ENCODE measurements at regions of chr4 and their contacts with region 1.

Region 1: GRCh38 chr4:88378691-88379559 is at the start of gene HERC6:
- DNase-seq: peak; percentile 83
- H3K4me3 ChIP-seq: peak within 1 kb of the TSS; percentile 76 to 97 (median 80)
- H3K27ac ChIP-seq: peak within 1 kb of the TSS; percentile 89 to 96 (median 92)
- H3K4me1 ChIP-seq: peaks cover 0 to 4% (median 0%) of the 10 kb centered on the region in 4 donors
- H3K27me3 ChIP-seq: no peaks in the 10 kb centered on the region
- CTCF ChIP-seq: peak; percentile 69 to 94 (median 79)
- EP300 ChIP-seq: no peak
- POLR2A ChIP-seq: peak; percentile 21
- total RNA-seq, gene HERC6: 3.2 to 15.2 (median 5.8) TPM

Region 2: DNA sequence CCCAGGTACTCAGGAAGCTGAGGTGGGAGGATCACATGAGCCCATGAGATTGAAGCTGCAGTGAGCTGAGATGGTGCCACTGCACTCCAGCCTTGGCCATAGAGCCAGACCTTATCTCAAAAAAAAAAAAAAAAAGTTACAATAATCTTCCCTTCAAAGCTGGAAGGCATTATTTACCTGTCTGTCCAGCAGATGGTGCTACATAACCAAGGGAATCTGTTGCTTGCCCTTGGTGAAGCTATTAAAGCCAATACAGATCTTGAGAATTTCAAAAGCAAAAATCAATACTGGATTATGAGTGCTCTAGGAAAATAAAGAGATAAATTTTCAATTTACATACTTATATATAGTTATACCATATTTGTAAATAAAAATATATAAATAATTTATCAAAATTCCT is 345.6 kb before region 1 on chr4:
- in situ Hi-C with region 1: loop called in 1 of 4 experiments (anchors 25 kb)
- intact Hi-C with region 1: no loop called
- DNase-seq: peak; percentile 25
- H3K4me3 ChIP-seq: no peak overlapping the region
- H3K27ac ChIP-seq: no peak overlapping the region
- H3K4me1 ChIP-seq: peaks cover 0 to 3% (median 0%) of the 10 kb centered on the region in 4 donors
- H3K27me3 ChIP-seq: no peaks in the 10 kb centered on the region
- CTCF ChIP-seq: peak; percentile 63 to 70 (median 65)
- EP300 ChIP-seq: no peak
- POLR2A ChIP-seq: no peak

Region 3: GRCh38 chr4:88291003-88291402 is 87.9 kb before region 1 on chr4:
- in situ Hi-C with region 1: no loop called
- intact Hi-C with region 1: loop called (anchors 10 kb)
- DNase-seq: no peak
- H3K4me3 ChIP-seq: no peak overlapping the region
- H3K27ac ChIP-seq: no peak overlapping the region
- H3K4me1 ChIP-seq: no peaks in the 10 kb centered on the region
- H3K27me3 ChIP-seq: no peaks in the 10 kb centered on the region
- CTCF ChIP-seq: no peak
- EP300 ChIP-seq: no peak
- POLR2A ChIP-seq: no peak

Region 4: DNA sequence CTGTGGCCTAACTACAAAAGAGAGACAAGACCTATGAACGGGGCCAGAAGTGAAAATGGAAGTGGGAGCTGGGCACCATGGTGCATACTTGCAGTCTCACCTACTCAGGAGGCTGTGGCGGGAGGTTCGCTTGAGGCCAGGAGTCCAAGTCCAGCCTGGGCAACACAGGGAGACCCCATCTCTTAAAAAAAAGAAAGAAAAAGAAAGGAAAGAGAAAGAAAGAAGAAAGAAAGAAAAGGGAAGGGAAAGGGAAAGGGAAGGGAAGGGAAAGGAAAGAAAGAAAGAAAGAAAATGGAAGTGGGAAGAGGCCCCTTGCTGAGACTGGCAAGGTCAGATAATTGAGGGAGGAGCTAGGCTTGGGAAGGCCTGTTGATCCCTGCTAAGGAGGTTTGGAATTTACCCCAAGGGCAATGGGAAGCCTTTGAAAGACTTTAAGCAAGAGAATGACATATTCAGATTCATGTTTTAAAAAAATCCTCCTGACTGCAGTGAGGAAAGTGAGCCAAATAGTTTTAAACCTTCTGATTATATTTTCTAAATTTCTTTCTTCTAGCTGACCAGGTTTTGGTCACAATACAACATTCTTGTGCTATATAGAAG is 60.3 kb after region 1 on chr4:
- in situ Hi-C with region 1: no loop called
- intact Hi-C with region 1: no loop called
- DNase-seq: no peak
- H3K4me3 ChIP-seq: no peak overlapping the region
- H3K27ac ChIP-seq: no peak overlapping the region
- H3K4me1 ChIP-seq: no peaks in the 10 kb centered on the region
- H3K27me3 ChIP-seq: no peaks in the 10 kb centered on the region
- CTCF ChIP-seq: no peak
- EP300 ChIP-seq: no peak
- POLR2A ChIP-seq: no peak